ENCODE measurements at regions of chr5 and their contacts with region 1.

Region 1: GRCh38 chr5:98928873-98929696 is at the start of gene CHD1:
- DNase-seq: peak; percentile 97
- ATAC-seq: peak; percentile 57
- H3K4me3 Mint-ChIP-seq: peak within 1 kb of the TSS; percentile 93
- H3K27ac Mint-ChIP-seq: peak within 1 kb of the TSS; percentile 99
- H3K4me1 Mint-ChIP-seq: peaks cover 56% of the 10 kb centered on the region
- H3K27me3 Mint-ChIP-seq: no peaks in the 10 kb centered on the region
- total RNA-seq, gene CHD1: 50.8 to 75.5 TPM

Region 2: DNA sequence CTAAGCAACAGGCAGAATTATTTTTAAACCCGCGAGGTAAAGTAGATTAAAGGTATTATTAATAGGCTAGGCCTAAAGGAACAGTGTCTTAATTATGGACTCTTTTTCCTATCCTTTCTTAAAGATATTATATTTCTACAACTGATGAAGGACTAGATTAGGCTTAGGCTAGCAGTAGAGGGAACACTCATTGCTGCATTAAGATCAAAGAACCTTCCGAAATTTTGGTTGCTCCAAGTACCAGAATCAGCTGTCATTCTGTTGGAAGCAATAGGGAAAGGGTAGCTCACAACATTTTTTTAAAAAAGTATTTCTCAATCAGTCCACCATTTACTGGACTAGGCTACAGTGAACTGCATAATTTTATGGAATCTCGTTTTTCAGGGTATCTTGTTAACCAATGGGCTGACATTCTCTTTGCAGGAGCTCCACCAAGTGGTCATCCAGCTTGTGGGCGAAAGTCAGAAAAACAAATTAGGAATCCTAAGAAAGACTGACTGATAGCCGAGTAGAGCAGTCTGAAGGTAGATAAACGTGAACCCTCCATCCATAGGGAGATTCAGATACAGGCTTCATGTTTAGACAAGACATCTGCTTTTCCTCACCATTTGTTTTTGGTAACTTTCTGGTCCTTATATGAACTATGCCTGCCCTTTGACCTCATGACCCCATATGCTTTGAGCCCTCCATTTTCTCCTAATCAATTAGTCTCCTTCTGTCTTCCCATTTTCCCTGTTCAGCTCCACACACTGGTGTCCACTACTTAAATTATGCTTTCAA is 103.3 kb after region 1 on chr5:
- CTCF ChIA-PET with region 1: no interaction called
- POLR2A ChIA-PET with region 1: no interaction called
- intact Hi-C with region 1: loop called (anchors 1 kb)
- DNase-seq: peak; percentile 58
- ATAC-seq: peak; percentile 22
- H3K4me3 Mint-ChIP-seq: peak overlapping the region; percentile 69
- H3K27ac Mint-ChIP-seq: peak overlapping the region; percentile 87
- H3K4me1 Mint-ChIP-seq: peaks cover 69% of the 10 kb centered on the region
- H3K27me3 Mint-ChIP-seq: no peaks in the 10 kb centered on the region

Region 3: GRCh38 chr5:99109900-99110299 is 180.8 kb after region 1 on chr5:
- CTCF ChIA-PET with region 1: no interaction called
- POLR2A ChIA-PET with region 1: no interaction called
- intact Hi-C with region 1: no loop called
- DNase-seq: no peak
- ATAC-seq: no peak
- H3K4me3 Mint-ChIP-seq: no peak overlapping the region
- H3K27ac Mint-ChIP-seq: no peak overlapping the region
- H3K4me1 Mint-ChIP-seq: no peaks in the 10 kb centered on the region
- H3K27me3 Mint-ChIP-seq: peaks cover 7% of the 10 kb centered on the region

Region 4: DNA sequence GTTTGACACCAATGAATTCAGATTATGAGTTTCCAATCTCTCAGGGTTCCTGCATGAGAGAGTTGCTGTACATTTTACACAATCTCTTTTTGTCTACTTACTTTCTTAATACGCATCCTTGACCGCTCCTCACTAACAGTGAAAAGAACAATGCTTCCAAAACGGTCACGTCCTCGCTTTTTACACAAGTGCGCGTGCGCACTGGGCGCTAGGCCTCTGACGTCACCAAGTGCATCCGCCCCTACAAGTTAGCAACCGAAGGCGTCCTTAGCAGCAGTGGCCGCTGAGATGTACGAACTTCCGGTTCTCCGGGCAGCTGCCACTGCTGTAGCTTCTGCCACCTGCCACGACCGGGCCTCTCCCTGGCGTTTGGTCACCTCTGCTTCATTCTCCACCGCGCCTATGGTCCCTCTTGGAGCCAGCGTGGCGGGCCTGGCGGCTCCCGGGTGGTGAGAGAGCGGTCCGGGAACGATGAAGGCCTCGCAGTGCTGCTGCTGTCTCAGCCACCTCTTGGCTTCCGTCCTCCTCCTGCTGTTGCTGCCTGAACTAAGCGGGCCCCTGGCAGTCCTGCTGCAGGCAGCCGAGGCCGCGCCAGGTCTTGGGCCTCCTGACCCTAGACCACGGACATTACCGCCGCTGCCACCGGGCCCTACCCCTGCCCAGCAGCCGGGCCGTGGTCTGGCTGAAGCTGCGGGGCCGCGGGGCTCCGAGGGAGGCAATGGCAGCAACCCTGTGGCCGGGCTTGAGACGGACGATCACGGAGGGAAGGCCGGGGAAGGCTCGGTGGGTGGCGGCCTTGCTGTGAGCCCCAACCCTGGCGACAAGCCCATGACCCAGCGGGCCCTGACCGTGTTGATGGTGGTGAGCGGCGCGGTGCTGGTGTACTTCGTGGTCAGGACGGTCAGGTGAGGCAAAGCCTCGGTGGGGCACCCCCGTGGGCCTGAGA is 1606.2 kb after region 1 on chr5 and contains the start of gene FAM174A:
- CTCF ChIA-PET with region 1: no interaction called
- POLR2A ChIA-PET with region 1: no interaction called
- intact Hi-C with region 1: loop called in 1 of 2 experiments (anchors 2 kb)
- DNase-seq: peak; percentile 96
- ATAC-seq: peak; percentile 92
- H3K4me3 Mint-ChIP-seq: peak within 1 kb of the TSS; percentile 90
- H3K27ac Mint-ChIP-seq: peak within 1 kb of the TSS; percentile 93
- H3K4me1 Mint-ChIP-seq: peaks cover 15% of the 10 kb centered on the region
- H3K27me3 Mint-ChIP-seq: no peaks in the 10 kb centered on the region
- total RNA-seq, gene FAM174A: 3.9 to 4.7 TPM

Measured in activated CD4-positive, alpha-beta T cell treated with anti-CD3 and anti-CD28 coated beads for 36 hours (primary cell).